ENCODE measurements at regions of chr5 and their contacts with region 1.

Region 1: GRCh38 chr5:7422317-7423106 is 26.6 kb downstream of the ADCY2 start:
- DNase-seq: no peak
- H3K4me3 ChIP-seq: no peak overlapping the region
- H3K27ac ChIP-seq: no peak overlapping the region
- H3K4me1 ChIP-seq: no peaks in the 10 kb centered on the region
- H3K27me3 ChIP-seq: no peaks in the 10 kb centered on the region
- CTCF ChIP-seq: no peak
- POLR2A ChIP-seq: no peak

Region 2: DNA sequence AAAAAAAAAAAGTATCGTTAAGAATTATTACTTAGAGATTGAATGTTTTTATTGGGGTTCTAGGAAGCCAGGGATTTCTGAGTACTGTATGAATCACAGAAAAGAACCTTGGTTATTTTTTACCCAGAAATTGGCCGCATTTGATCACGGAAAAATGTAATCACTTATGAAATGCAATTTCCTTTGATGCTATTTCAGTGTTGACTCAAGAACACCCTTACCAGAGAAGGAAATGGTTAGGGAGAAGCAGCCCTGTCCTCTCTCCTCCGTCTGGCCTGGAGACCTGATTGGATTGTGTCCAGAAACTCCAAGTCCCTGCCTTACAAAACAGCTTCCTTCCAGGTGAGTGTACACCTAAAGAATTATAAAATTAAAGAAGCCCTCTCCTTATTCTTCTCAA is 1160.8 kb before region 1 on chr5:
- intact Hi-C with region 1: no loop called
- DNase-seq: no peak
- H3K4me3 ChIP-seq: no peak overlapping the region
- H3K27ac ChIP-seq: no peak overlapping the region
- H3K4me1 ChIP-seq: no peaks in the 10 kb centered on the region
- H3K27me3 ChIP-seq: no peaks in the 10 kb centered on the region
- CTCF ChIP-seq: no peak
- POLR2A ChIP-seq: no peak

Region 3: DNA sequence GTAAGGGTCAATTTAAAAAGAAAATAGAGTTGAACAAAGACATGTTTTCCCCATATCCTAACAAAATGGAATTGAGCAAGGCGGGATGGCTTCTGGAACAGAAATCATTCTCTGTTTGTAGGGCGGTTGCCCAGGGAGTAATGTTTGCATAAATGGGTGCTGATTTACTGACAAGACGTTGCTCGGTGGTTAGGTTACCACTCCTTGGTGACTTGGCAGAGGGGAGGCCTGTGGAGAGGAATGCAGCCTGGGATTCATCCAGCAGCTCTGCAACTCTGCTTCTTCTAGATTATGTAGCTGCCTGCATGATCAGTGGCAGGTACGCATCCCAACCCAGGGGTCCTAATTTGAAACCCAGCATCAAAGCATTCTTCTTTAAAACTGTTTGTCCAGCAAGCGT is 228.2 kb after region 1 on chr5:
- intact Hi-C with region 1: loop called (anchors 10 kb)
- DNase-seq: peak; percentile 20 to 64
- H3K4me3 ChIP-seq: no peak overlapping the region
- H3K27ac ChIP-seq: no peak overlapping the region
- H3K4me1 ChIP-seq: no peaks in the 10 kb centered on the region
- H3K27me3 ChIP-seq: no peaks in the 10 kb centered on the region
- CTCF ChIP-seq: no peak
- POLR2A ChIP-seq: no peak